Naive thymus-derived CD8-positive, alpha-beta T cell (primary cell): ENCODE measurements at regions of chr12 and their contacts with region 1.

Region 1: GRCh38 chr12:50763639-50764285 is at the start of gene ATF1:
- DNase-seq: peak; percentile 81 to 93 (median 89)
- ATAC-seq: peak; percentile 78 to 80
- H3K4me3 Mint-ChIP-seq: peak within 1 kb of the TSS; percentile 92 to 97 (median 94)
- H3K27ac Mint-ChIP-seq: peak within 1 kb of the TSS; percentile 90 to 99 (median 98)
- H3K4me1 Mint-ChIP-seq: peaks cover 14 to 50% (median 42%) of the 10 kb centered on the region in 4 donors
- H3K27me3 Mint-ChIP-seq: peaks cover 0 to 2% (median 0%) of the 10 kb centered on the region in 5 donors
- polyA plus RNA-seq, gene ATF1: 23.5 to 36.3 (median 34.5) TPM

Region 2: GRCh38 chr12:50504798-50505385 is 258.9 kb before region 1 on chr12 and contains the start of gene DIP2B:
- POLR2A ChIA-PET with region 1: interaction called, 11 read pairs
- DNase-seq: peak; percentile 90 to 97 (median 94)
- ATAC-seq: peak; percentile 85 to 86
- H3K4me3 Mint-ChIP-seq: peak within 1 kb of the TSS; percentile 93 to 98 (median 96)
- H3K27ac Mint-ChIP-seq: peak within 1 kb of the TSS; percentile 87 to 95 (median 95)
- H3K4me1 Mint-ChIP-seq: peaks cover 32 to 49% (median 46%) of the 10 kb centered on the region in 4 donors
- H3K27me3 Mint-ChIP-seq: peaks cover 0 to 1% (median 0%) of the 10 kb centered on the region in 5 donors
- polyA plus RNA-seq, gene DIP2B: 6.2 to 13.5 (median 9.4) TPM

Region 3: DNA sequence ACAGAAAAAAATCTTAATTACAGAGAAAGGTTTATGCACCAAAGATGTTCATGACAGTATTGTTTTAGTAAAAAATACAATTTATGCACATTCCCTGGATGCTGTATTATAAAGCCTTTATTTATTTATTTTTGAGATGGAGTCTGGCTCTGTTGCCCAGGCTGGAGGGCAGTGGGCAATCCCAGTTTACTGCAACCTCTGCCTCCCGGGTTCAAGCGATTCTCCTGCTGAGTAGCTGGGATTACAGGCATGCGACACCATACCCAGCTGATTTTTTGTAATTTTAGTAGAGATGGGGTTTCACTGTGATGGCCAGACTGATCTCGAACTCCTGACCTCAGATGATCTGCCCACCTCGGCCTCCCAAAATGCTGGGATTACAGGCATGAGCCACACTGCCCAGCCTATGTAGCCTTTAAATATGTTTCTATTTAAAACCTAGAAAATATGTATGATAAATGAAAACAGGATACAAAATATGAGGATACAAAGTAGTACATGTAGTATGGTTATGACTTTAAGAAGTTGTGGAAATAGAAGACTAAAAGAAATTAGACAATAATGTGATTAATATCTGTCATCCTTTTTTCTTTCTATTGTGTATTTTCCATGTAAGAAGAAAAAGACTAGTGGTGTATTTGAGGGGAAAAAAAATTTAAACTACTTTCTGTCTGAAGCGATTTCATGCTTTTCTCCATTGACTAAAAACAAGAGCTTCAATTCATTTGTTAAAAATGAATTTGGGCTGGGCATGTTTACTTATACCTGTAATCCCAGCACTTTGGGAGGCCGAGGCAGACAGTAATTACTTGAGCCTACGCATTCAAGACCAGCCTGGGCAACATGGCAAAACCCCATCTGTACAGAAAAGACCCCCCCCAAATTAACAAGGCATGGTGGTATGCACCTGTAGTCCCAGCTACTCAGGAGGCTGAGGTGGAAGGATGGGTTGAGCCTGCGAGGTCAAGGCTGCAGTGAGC is 13.3 kb after region 1 on chr12:
- POLR2A ChIA-PET with region 1: interaction called, 28 read pairs
- DNase-seq: no peak
- ATAC-seq: no peak
- H3K4me3 Mint-ChIP-seq: no peak overlapping the region
- H3K27ac Mint-ChIP-seq: peak overlapping the region in 2 of 10 donors; percentile 10 to 61
- H3K4me1 Mint-ChIP-seq: peaks cover 14 to 28% (median 23%) of the 10 kb centered on the region in 4 donors
- H3K27me3 Mint-ChIP-seq: no peaks in the 10 kb centered on the region

Region 4: GRCh38 chr12:50986966-50987737 is 223.4 kb after region 1 on chr12:
- POLR2A ChIA-PET with region 1: interaction called, 18 read pairs
- DNase-seq: peak in 9 of 10 donors; percentile 2 to 70 (median 34)
- ATAC-seq: peak; percentile 70 to 86
- H3K4me3 Mint-ChIP-seq: no peak overlapping the region
- H3K27ac Mint-ChIP-seq: peak overlapping the region in 8 of 10 donors; percentile 24 to 85 (median 60)
- H3K4me1 Mint-ChIP-seq: peaks cover 2 to 9% (median 6%) of the 10 kb centered on the region in 4 donors
- H3K27me3 Mint-ChIP-seq: no peaks in the 10 kb centered on the region

Region 5: GRCh38 chr12:51025836-51026638 is 262.3 kb after region 1 on chr12 and contains the start of gene SLC11A2:
- POLR2A ChIA-PET with region 1: interaction called, 41 read pairs
- DNase-seq: peak; percentile 83 to 94 (median 87)
- ATAC-seq: peak; percentile 90 to 92
- H3K4me3 Mint-ChIP-seq: peak within 1 kb of the TSS; percentile 94 to 99 (median 96)
- H3K27ac Mint-ChIP-seq: peak within 1 kb of the TSS; percentile 87 to 98 (median 96)
- H3K4me1 Mint-ChIP-seq: peaks cover 36 to 68% (median 61%) of the 10 kb centered on the region in 4 donors
- H3K27me3 Mint-ChIP-seq: no peaks in the 10 kb centered on the region
- polyA plus RNA-seq, gene SLC11A2: 6.9 to 17.2 (median 9.0) TPM

Region 6: GRCh38 chr12:51083126-51083833 is 319.5 kb after region 1 on chr12 and contains the start of gene CSRNP2:
- POLR2A ChIA-PET with region 1: interaction called, 13 read pairs
- DNase-seq: peak; percentile 92 to 97 (median 94)
- ATAC-seq: peak; percentile 99
- H3K4me3 Mint-ChIP-seq: peak within 1 kb of the TSS; percentile 91 to 99 (median 96)
- H3K27ac Mint-ChIP-seq: peak within 1 kb of the TSS; percentile 89 to 98 (median 95)
- H3K4me1 Mint-ChIP-seq: peaks cover 18 to 41% (median 37%) of the 10 kb centered on the region in 4 donors
- H3K27me3 Mint-ChIP-seq: no peaks in the 10 kb centered on the region
- polyA plus RNA-seq, gene CSRNP2: 2.7 to 3.6 (median 2.7) TPM